GM10248 (cell line): ENCODE measurements at regions of chr19 and their contacts with region 1.

Region 1: DNA sequence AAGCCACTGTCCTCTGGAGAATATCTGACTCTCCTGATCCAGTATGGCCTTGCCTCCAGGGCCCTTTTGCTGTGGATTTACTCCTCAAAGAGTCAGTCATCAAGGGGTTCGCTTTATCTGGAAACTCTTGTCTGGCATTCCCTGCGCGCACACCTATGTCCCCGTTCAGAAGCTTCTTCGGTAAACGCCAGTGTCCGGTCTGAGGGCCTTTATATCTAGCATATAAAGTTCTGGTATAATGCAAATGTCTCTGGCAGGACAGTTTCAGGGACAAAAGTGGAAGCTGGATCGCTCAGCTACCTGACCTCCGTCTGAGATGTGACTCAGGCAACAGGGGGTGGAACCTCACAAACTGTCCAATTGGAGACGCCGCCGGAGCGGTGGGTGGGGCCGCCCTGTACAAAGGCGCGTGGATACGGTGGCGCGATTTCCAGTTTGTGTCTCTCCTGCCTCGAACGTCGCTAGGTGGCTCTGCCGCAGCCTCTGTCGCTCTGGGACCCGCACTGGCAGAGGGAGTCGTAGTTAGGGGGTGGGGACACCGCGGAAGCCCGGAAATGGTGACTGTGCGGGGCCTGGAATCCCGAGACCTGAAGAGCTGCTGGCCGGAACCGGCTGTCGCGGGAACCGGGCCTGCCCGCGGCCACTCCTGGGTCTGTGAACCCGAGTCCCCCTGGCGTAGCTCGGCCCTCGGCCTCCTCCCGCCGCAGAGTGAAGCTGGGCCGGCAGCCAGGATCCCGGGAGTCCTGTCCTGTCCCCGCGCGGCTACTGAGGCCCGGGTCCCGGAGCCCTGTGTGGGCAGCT is 10.6 kb upstream of the ZNF709 start:
- DNase-seq: peak; percentile 89
- CTCF ChIP-seq: peak; percentile 44

Region 2: GRCh38 chr19:12513531-12514061 is 18.4 kb after region 1 on chr19:
- CTCF ChIA-PET with region 1: interaction called, 12 read pairs
- POLR2A ChIA-PET with region 1: no interaction called
- DNase-seq: no peak
- CTCF ChIP-seq: no peak

Region 3: DNA sequence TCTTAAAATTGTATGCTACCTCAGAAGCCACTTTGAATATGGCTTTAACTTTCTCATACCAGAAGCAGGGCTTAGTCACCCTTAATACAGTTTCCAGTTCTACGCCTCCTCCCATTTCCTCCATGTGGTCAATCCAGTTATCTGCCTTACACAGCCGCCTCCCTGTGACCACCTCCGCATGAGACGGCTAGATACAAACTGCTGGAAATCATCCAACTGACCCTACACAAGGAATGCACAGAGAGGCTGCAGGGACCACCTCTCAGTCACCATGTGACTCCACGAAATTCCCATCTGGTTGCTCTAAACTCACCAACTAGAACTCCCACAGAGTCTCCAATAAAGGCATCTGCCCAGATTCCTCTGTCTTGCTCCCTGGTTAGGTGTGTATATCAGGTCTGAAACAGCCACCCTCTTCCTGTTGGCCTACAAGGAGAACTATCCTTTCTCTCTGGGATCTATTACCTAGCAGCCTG is 49.2 kb after region 1 on chr19:
- CTCF ChIA-PET with region 1: no interaction called
- POLR2A ChIA-PET with region 1: no interaction called
- DNase-seq: no peak
- CTCF ChIP-seq: no peak